Endothelial cell of umbilical vein (primary cell): ENCODE measurements at regions of chr6 and their contacts with region 1.

Region 1: GRCh38 chr6:33425668-33426577 is 6.1 kb downstream of the SYNGAP1 start:
- DNase-seq: peak; percentile 85
- H3K4me3 ChIP-seq: peak overlapping the region; percentile 54 to 70 (median 69)
- H3K27ac ChIP-seq: peak overlapping the region; percentile 56
- H3K4me1 ChIP-seq: peaks cover 26% of the 10 kb centered on the region
- H3K27me3 ChIP-seq: peaks cover 16% of the 10 kb centered on the region in 2 experiments
- CTCF ChIP-seq: peak; percentile 29 to 75
- POLR2A ChIP-seq: peak; percentile 94

Region 2: GRCh38 chr6:33271458-33272274 is 154.3 kb before region 1 on chr6 and contains the starts of genes RPS18 and VPS52:
- CTCF ChIA-PET with region 1: interaction called, 8 read pairs
- POLR2A ChIA-PET with region 1: no interaction called
- dilution Hi-C with region 1: no loop called
- intact Hi-C with region 1: loop called (anchors 5 kb)
- DNase-seq: peak; percentile 99
- H3K4me3 ChIP-seq: peak within 1 kb of the TSS; percentile 83 to 96 (median 86)
- H3K27ac ChIP-seq: peak within 1 kb of the TSS; percentile 85
- H3K4me1 ChIP-seq: peaks cover 47% of the 10 kb centered on the region
- H3K27me3 ChIP-seq: no peaks in the 10 kb centered on the region
- CTCF ChIP-seq: no peak
- POLR2A ChIP-seq: peak; percentile 99
- total RNA-seq, gene RPS18: 2,193 and 2,336 TPM in 2 replicates
- total RNA-seq, gene VPS52: 43.8 and 49.2 TPM in 2 replicates

Region 3: DNA sequence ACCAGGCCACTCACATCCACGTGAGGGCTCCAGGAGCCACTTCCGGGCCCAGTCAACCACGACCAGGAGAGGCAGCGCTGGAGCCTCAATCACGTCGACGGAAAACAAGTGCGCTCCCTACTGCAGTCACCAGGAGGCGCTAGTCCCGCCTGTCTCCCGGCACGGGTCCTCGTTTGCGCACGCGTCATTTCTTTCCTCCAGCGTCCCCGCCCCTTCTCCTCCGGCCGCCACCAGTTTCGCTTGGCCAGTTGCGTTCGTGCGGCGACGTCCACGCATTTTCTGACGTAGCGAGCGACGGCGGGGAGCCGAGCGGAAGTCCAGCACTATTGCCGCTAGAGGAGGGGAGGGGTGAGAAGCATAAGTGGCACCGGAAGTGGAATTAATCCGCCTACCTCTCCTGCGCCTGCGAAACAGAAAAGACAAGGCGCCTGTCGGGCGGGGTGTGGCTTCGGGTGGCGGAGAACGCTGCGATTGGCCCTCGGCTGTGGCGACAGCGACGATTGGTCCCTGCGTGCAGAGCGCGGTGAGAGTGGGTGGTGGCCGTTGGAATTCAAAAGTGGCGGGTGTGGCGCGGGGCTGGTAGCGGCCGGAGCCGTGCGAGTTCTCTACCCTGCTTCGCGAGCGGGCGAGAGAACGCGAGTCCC is 34.5 kb before region 1 on chr6 and contains the start of gene KIFC1:
- CTCF ChIA-PET with region 1: interaction called, 15 read pairs
- POLR2A ChIA-PET with region 1: no interaction called
- dilution Hi-C with region 1: no loop called
- intact Hi-C with region 1: loop called (anchors 1 kb)
- DNase-seq: peak; percentile 100
- H3K4me3 ChIP-seq: peak within 1 kb of the TSS; percentile 73 to 85 (median 84)
- H3K27ac ChIP-seq: peak within 1 kb of the TSS; percentile 57
- H3K4me1 ChIP-seq: peaks cover 26% of the 10 kb centered on the region
- H3K27me3 ChIP-seq: no peaks in the 10 kb centered on the region
- CTCF ChIP-seq: peak; percentile 98 to 99
- POLR2A ChIP-seq: peak; percentile 28
- total RNA-seq, gene KIFC1: 63.4 and 65.9 TPM in 2 replicates

Region 4: DNA sequence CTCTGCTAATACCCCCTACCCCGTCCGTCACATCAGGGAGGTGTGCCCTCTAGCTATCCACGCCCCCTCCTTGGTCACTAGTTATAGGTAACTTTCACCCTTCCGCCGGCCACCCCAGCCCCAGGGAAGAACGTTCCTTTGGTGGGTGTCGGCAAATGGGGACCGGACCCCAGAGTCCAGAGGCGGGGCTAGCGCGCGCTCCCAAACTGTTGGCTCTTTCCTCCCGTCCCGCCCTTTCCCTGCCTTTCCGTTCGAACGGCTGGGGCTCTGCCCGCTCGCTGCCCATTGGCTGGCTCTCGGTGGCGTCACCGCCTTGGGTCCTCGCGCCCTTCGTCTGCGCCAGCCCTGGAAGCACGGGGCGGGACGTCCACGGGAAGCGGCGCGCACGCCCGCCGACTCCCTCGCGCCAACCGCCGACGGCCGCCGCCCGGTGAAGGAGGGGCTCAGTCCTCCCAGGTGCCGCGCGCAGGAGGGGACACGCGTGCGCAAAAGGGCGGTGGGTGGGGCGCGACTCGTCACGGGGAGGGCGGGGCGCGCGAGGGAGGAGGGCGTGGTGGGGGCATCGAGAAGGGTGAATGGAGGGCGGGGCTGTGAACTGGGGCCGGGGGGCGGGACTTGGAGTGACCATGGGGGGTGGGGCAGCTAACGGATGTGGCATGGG is 15.7 kb before region 1 on chr6:
- CTCF ChIA-PET with region 1: interaction called, 14 read pairs
- POLR2A ChIA-PET with region 1: no interaction called
- dilution Hi-C with region 1: no loop called
- intact Hi-C with region 1: loop called (anchors 1 kb)
- DNase-seq: peak; percentile 99
- H3K4me3 ChIP-seq: peak overlapping the region; percentile 41 to 85 (median 71)
- H3K27ac ChIP-seq: peak overlapping the region; percentile 73
- H3K4me1 ChIP-seq: peaks cover 10% of the 10 kb centered on the region
- H3K27me3 ChIP-seq: no peaks in the 10 kb centered on the region
- CTCF ChIP-seq: no peak
- POLR2A ChIP-seq: peak; percentile 60

Region 5: DNA sequence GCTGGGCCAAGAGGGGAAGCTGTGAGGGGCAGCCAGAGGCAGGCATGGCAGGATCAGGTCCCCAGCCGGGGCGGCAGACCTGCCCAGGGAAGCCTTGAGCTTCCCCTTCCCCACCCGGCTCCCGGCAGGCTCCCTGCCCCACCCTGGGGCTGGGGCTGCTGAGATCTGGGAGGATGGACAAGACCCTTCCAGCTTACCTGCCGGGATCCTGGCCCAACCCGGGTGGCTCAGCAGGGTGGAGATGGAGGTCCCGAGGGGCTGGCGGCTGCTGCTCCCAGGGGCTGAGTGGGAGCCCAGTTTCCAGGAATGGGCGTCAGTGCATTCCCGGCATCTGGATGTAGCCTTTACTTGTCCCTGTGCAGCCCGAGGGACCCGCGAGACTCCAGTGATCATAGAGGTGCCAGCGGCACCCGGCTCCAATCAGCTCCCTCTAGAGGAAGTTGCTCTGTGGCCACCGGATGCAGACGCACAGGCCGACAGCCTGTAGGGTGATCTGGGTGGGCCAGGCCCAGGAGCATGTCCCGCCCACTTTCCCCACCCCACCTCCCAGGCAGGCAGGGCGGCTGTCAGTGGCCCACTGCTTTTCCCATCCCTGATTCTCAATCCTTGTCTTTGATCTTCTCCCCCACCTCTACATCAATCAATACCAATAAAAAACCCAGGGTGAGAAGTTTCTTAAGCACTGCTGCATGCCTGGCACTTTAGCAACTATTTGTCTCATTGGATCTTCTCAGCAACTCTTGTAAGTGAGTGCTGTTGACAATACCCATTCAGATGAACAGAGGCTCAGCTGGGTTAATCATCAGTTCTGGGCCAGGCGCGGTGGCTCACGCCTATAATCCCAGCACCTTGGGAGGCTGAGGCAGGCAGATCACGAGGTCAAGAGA is 154.1 kb after region 1 on chr6 and contains the start of gene BAK1:
- CTCF ChIA-PET with region 1: interaction called, 3 read pairs
- POLR2A ChIA-PET with region 1: interaction called, 3 read pairs
- dilution Hi-C with region 1: no loop called
- intact Hi-C with region 1: loop called (anchors 2 kb)
- DNase-seq: peak; percentile 91
- H3K4me3 ChIP-seq: peak within 1 kb of the TSS; percentile 78 to 93 (median 83)
- H3K27ac ChIP-seq: peak within 1 kb of the TSS; percentile 70
- H3K4me1 ChIP-seq: peaks cover 17% of the 10 kb centered on the region
- H3K27me3 ChIP-seq: no peaks in the 10 kb centered on the region
- CTCF ChIP-seq: peak; percentile 28 to 63
- POLR2A ChIP-seq: peak; percentile 84
- total RNA-seq, gene BAK1: 25.4 and 27.5 TPM in 2 replicates

Region 6: DNA sequence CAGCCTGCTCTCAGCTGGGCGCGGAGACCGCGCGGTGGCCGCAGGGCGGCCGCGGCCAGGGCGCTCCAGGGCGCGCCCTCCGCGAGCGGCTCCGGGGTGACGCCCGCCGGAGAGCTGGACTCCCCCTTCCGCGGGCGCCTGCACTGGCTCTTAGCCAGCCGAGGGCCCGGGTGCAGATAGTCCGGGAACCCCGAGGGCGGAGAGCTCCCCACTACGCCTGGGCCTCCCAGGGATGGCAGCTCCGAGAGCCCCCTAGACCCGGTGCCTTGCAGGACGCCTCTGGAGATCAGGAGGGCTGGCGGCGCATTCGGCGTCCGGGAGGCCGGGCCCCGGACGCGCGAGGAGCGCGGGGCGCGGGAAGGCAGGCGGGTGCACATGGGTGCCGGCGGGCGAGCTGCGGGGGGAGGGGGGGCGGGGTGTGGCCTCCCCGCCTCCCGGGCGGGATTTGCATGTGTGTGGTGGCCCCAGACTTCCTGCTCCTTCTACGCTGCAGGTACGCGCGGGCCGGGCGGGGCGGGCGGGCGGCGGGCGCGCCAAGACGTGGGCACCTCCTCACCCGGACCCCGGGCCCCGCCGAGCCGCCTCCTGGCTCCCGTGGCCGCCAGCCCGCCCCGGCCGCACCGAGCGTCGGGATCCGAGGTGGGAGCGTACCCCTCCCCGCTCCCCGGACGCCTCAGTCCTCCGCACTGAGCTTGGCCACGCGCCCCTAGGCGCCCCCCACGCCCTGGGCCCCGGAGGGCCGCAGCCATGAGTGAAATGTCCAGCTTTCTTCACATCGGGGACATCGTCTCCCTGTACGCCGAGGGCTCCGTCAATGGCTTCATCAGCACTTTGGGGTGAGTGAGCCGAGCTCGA is 195.2 kb after region 1 on chr6 and contains the start of gene ITPR3:
- CTCF ChIA-PET with region 1: no interaction called
- POLR2A ChIA-PET with region 1: no interaction called
- dilution Hi-C with region 1: no loop called
- intact Hi-C with region 1: loop called (anchors 2 kb)
- DNase-seq: peak; percentile 32
- H3K4me3 ChIP-seq: peak within 1 kb of the TSS; percentile 78 to 93 (median 78)
- H3K27ac ChIP-seq: peak within 1 kb of the TSS; percentile 62
- H3K4me1 ChIP-seq: peaks cover 15% of the 10 kb centered on the region
- H3K27me3 ChIP-seq: no peaks in the 10 kb centered on the region
- CTCF ChIP-seq: no peak
- POLR2A ChIP-seq: peak; percentile 9
- total RNA-seq, gene ITPR3: 40.5 and 52.2 TPM in 2 replicates